ENCODE measurements at regions of chr1 and their contacts with region 1.

Region 1: DNA sequence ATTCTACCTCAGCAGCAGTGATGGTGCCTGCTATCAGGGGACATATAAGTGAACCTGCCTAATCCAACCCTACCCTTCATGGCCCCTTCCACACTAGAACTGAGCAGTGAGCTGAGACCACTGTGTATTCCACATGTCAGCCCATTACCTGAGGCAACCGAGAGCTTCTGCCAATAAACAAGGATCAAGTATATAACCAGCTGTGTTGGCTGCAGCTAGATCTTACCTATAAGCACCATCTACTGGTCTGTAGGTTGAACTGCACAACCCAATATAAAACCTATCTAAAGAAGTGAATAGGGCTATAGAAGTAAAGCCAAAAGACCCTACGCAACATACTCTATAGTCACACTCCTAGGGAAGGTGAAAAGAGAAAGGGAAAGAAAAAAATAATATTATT is 376.9 kb downstream of the HHIPL2 start:
- DNase-seq: no peak
- ATAC-seq: peak in 3 of 8 donors; percentile 38 to 55 (median 49)
- H3K4me3 ChIP-seq: no peak overlapping the region
- H3K27ac ChIP-seq: no peak overlapping the region
- H3K4me1 ChIP-seq: no peaks in the 10 kb centered on the region
- H3K27me3 ChIP-seq: no peaks in the 10 kb centered on the region
- CTCF ChIP-seq: peak; percentile 9 to 61 (median 53)

Region 2: GRCh38 chr1:221478050-221478949 is 692.7 kb before region 1 on chr1:
- intact Hi-C with region 1: loop called in 3 of 10 experiments (anchors 2 to 5 kb)
- DNase-seq: peak; percentile 18 to 37
- ATAC-seq: peak; percentile 61 to 93 (median 77)
- H3K4me3 ChIP-seq: no peak overlapping the region
- H3K27ac ChIP-seq: no peak overlapping the region
- H3K4me1 ChIP-seq: peaks cover 0 to 7% (median 0%) of the 10 kb centered on the region in 9 donors
- H3K27me3 ChIP-seq: peaks cover 0 to 37% (median 14%) of the 10 kb centered on the region in 7 donors
- CTCF ChIP-seq: peak in 8 of 9 donors; percentile 15 to 73 (median 62)

Region 3: DNA sequence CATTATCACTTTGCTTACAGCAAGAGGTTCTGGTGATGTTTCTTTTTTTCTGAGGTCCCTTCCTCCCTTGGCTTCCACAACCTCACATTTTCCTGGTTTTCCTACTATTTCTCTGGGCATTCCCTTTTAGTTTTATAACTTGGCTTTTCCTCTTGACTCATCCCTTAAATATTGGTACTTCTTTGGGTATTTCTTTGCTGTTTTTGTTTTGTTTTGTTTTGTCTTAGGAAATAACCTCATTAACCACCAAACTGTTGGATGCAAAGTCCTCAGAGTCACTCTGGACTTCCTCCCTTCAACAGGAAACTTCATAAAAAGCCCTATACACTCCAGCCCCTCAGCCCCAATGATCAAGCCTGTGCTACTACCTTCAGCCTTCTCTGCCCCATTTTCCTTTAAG is 640.2 kb before region 1 on chr1:
- intact Hi-C with region 1: loop called in 1 of 10 experiments (anchors 10 kb)
- DNase-seq: no peak
- ATAC-seq: no peak
- H3K4me3 ChIP-seq: no peak overlapping the region
- H3K27ac ChIP-seq: no peak overlapping the region
- H3K4me1 ChIP-seq: no peaks in the 10 kb centered on the region
- H3K27me3 ChIP-seq: peaks cover 0 to 13% (median 0%) of the 10 kb centered on the region in 7 donors
- CTCF ChIP-seq: no peak

Region 4: GRCh38 chr1:221543529-221544120 is 627.4 kb before region 1 on chr1:
- intact Hi-C with region 1: loop called in 6 of 10 experiments (anchors 2 to 10 kb)
- DNase-seq: no peak
- ATAC-seq: peak in 3 of 8 donors; percentile 22 to 61 (median 37)
- H3K4me3 ChIP-seq: no peak overlapping the region
- H3K27ac ChIP-seq: no peak overlapping the region
- H3K4me1 ChIP-seq: no peaks in the 10 kb centered on the region
- H3K27me3 ChIP-seq: peaks cover 0 to 3% (median 0%) of the 10 kb centered on the region in 7 donors
- CTCF ChIP-seq: peak; percentile 11 to 69 (median 60)

Region 5: GRCh38 chr1:221557013-221557412 is 614.0 kb before region 1 on chr1:
- intact Hi-C with region 1: loop called in 1 of 10 experiments (anchors 10 kb)
- DNase-seq: no peak
- ATAC-seq: no peak
- H3K4me3 ChIP-seq: no peak overlapping the region
- H3K27ac ChIP-seq: no peak overlapping the region
- H3K4me1 ChIP-seq: peaks cover 0 to 3% (median 0%) of the 10 kb centered on the region in 9 donors
- H3K27me3 ChIP-seq: no peaks in the 10 kb centered on the region
- CTCF ChIP-seq: no peak

Region 6: GRCh38 chr1:222009105-222009730 is 161.8 kb before region 1 on chr1:
- intact Hi-C with region 1: loop called in 1 of 10 experiments (anchors 10 kb)
- DNase-seq: no peak
- ATAC-seq: peak in 3 of 8 donors; percentile 41 to 48 (median 47)
- H3K4me3 ChIP-seq: no peak overlapping the region
- H3K27ac ChIP-seq: no peak overlapping the region
- H3K4me1 ChIP-seq: peaks cover 0 to 5% (median 0%) of the 10 kb centered on the region in 9 donors
- H3K27me3 ChIP-seq: no peaks in the 10 kb centered on the region
- CTCF ChIP-seq: peak in 7 of 9 donors; percentile 23 to 55 (median 49)

Region 7: DNA sequence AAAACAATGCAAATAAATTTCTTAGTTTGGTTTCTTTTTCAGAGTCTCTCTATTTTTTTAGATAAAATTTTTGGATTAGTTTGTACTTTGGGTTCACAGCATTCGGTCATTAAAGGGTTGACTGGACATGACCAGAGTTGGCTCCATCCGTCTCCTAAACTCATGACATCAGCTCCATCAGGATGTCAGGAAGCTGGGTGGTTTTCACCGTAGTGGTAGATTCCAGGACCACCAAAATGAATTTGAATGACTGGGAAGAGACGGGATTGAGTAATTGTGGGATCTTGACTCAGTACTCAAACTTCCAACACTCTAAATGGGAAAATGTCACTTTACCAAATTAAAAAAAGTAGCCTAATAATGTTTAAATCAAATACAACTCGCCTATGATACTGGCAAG is 149.9 kb before region 1 on chr1:
- intact Hi-C with region 1: loop called in 2 of 10 experiments (anchors 10 kb)
- DNase-seq: no peak
- ATAC-seq: peak in 1 of 8 donors; percentile 51
- H3K4me3 ChIP-seq: no peak overlapping the region
- H3K27ac ChIP-seq: peak overlapping the region in 1 of 10 donors; percentile 16
- H3K4me1 ChIP-seq: peaks cover 0 to 3% (median 0%) of the 10 kb centered on the region in 9 donors
- H3K27me3 ChIP-seq: no peaks in the 10 kb centered on the region
- CTCF ChIP-seq: no peak

Region 8: GRCh38 chr1:222126052-222126451 is 45.0 kb before region 1 on chr1:
- intact Hi-C with region 1: no loop called
- DNase-seq: no peak
- ATAC-seq: no peak
- H3K4me3 ChIP-seq: no peak overlapping the region
- H3K27ac ChIP-seq: no peak overlapping the region
- H3K4me1 ChIP-seq: no peaks in the 10 kb centered on the region
- H3K27me3 ChIP-seq: peaks cover 0 to 4% (median 0%) of the 10 kb centered on the region in 7 donors
- CTCF ChIP-seq: no peak

Region 9: DNA sequence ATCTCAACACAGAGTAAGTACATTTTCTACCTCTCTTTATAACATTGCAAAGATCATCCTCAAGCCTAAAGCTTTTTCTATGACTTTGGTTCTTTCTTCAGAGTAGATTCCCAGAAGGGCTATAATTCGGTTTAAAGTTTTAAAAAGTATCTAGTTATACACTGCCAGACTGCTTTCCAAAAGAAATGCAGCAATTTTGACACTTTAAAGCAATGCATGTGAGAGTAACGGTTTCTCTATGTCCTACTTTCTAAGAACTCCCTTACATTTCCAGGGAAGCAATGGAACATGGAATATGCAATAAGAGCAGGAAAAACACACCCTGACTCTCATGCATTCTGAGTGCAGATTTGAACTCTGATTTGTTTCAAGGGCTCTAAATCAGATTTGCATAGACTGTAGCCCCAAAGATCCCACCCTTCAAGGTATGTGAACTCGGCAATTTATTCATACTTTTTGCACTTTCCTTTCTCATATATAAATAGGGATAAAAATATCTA is 45.3 kb after region 1 on chr1:
- intact Hi-C with region 1: no loop called
- DNase-seq: no peak
- ATAC-seq: no peak
- H3K4me3 ChIP-seq: no peak overlapping the region
- H3K27ac ChIP-seq: no peak overlapping the region
- H3K4me1 ChIP-seq: no peaks in the 10 kb centered on the region
- H3K27me3 ChIP-seq: peaks cover 0 to 3% (median 0%) of the 10 kb centered on the region in 7 donors
- CTCF ChIP-seq: no peak

Measured in heart right ventricle (tissue), 16 donors.